Activated CD8-positive, alpha-beta T cell treated with anti-CD3 and anti-CD28 coated beads for 36 hours (primary cell): ENCODE measurements at regions of chr6 and their contacts with region 1.

Region 1: GRCh38 chr6:158972241-158973233 is 27.5 kb downstream of the RSPH3 start:
- DNase-seq: no peak
- ATAC-seq: peak; percentile 71
- H3K4me3 Mint-ChIP-seq: no peak overlapping the region
- H3K27ac Mint-ChIP-seq: no peak overlapping the region
- H3K4me1 Mint-ChIP-seq: no peaks in the 10 kb centered on the region
- H3K27me3 Mint-ChIP-seq: no peaks in the 10 kb centered on the region
- CTCF ChIP-seq: peak; percentile 81

Region 2: GRCh38 chr6:158704181-158704822 is 268.2 kb before region 1 on chr6:
- CTCF ChIA-PET with region 1: interaction called, 54 read pairs
- POLR2A ChIA-PET with region 1: no interaction called
- intact Hi-C with region 1: loop called (anchors 5 kb)
- DNase-seq: peak; percentile 78
- ATAC-seq: peak; percentile 94
- H3K4me3 Mint-ChIP-seq: peak overlapping the region; percentile 47
- H3K27ac Mint-ChIP-seq: peak overlapping the region; percentile 67
- H3K4me1 Mint-ChIP-seq: peaks cover 21% of the 10 kb centered on the region
- H3K27me3 Mint-ChIP-seq: no peaks in the 10 kb centered on the region
- CTCF ChIP-seq: peak; percentile 98

Region 3: GRCh38 chr6:158793432-158793831 is 179.1 kb before region 1 on chr6:
- CTCF ChIA-PET with region 1: interaction called, 34 read pairs
- POLR2A ChIA-PET with region 1: interaction called, 3 read pairs
- intact Hi-C with region 1: loop called (anchors 5 kb)
- DNase-seq: peak; percentile 50
- ATAC-seq: peak; percentile 65
- H3K4me3 Mint-ChIP-seq: no peak overlapping the region
- H3K27ac Mint-ChIP-seq: peak overlapping the region; percentile 70
- H3K4me1 Mint-ChIP-seq: peaks cover 88% of the 10 kb centered on the region
- H3K27me3 Mint-ChIP-seq: no peaks in the 10 kb centered on the region
- CTCF ChIP-seq: peak; percentile 58

Region 4: GRCh38 chr6:158808941-158809678 is 163.4 kb before region 1 on chr6:
- CTCF ChIA-PET with region 1: interaction called, 15 read pairs
- POLR2A ChIA-PET with region 1: no interaction called
- intact Hi-C with region 1: no loop called
- DNase-seq: peak; percentile 55
- ATAC-seq: peak; percentile 26
- H3K4me3 Mint-ChIP-seq: no peak overlapping the region
- H3K27ac Mint-ChIP-seq: peak overlapping the region; percentile 77
- H3K4me1 Mint-ChIP-seq: peaks cover 96% of the 10 kb centered on the region
- H3K27me3 Mint-ChIP-seq: no peaks in the 10 kb centered on the region
- CTCF ChIP-seq: no peak

Region 5: GRCh38 chr6:158958504-158959386 is 13.8 kb before region 1 on chr6:
- CTCF ChIA-PET with region 1: interaction called, 44 read pairs
- POLR2A ChIA-PET with region 1: no interaction called
- intact Hi-C with region 1: no loop called
- DNase-seq: peak; percentile 30
- ATAC-seq: peak; percentile 56
- H3K4me3 Mint-ChIP-seq: no peak overlapping the region
- H3K27ac Mint-ChIP-seq: no peak overlapping the region
- H3K4me1 Mint-ChIP-seq: no peaks in the 10 kb centered on the region
- H3K27me3 Mint-ChIP-seq: no peaks in the 10 kb centered on the region
- CTCF ChIP-seq: no peak